Activated CD8-positive, alpha-beta memory T cell treated with anti-CD3 and anti-CD28 coated beads, Interleukin-2, amount 10 ng/mL, durations not matched to agents 7 days and 5 days (primary cell): ENCODE measurements at regions of chr1 and their contacts with region 1.

Region 1: GRCh38 chr1:160830321-160831153 is 32.1 kb downstream of the CD244 start:
- DNase-seq: peak; percentile 81
- ATAC-seq: peak; percentile 70
- H3K4me3 Mint-ChIP-seq: no peak overlapping the region
- H3K27ac Mint-ChIP-seq: no peak overlapping the region
- H3K4me1 Mint-ChIP-seq: peaks cover 18% of the 10 kb centered on the region
- H3K27me3 Mint-ChIP-seq: no peaks in the 10 kb centered on the region

Region 2: DNA sequence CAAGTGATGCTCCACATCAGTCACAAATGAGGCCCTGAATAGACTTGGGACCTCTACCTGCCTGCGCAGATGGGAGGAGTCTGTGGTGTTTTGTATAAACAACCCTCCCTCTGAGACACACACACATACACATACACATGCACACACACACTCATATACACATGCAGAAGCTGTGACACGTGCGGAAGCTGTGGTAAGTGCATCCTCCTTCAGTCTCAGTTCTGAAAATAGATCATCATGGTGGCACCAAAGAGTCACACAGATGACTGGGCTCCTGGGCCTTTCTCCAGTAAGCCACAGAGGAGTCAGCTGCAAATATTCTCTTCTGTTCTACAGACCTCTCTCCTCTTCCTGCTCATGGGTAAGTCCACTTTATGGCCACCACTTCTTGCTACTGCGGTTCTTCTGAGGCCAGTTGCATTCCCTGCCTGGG is 34.6 kb before region 1 on chr1 and contains the start of gene LY9:
- CTCF ChIA-PET with region 1: interaction called, 53 read pairs
- DNase-seq: peak; percentile 93
- ATAC-seq: peak; percentile 92
- H3K4me3 Mint-ChIP-seq: peak within 1 kb of the TSS; percentile 74
- H3K27ac Mint-ChIP-seq: peak within 1 kb of the TSS; percentile 89
- H3K4me1 Mint-ChIP-seq: peaks cover 59% of the 10 kb centered on the region
- H3K27me3 Mint-ChIP-seq: peaks cover 27% of the 10 kb centered on the region
- total RNA-seq, gene LY9: 1.3 to 8.0 TPM

Region 3: GRCh38 chr1:160891474-160891873 is 60.9 kb after region 1 on chr1:
- CTCF ChIA-PET with region 1: no interaction called
- DNase-seq: no peak
- ATAC-seq: no peak
- H3K4me3 Mint-ChIP-seq: no peak overlapping the region
- H3K27ac Mint-ChIP-seq: no peak overlapping the region
- H3K4me1 Mint-ChIP-seq: no peaks in the 10 kb centered on the region
- H3K27me3 Mint-ChIP-seq: peaks cover 21% of the 10 kb centered on the region